GM10248 (cell line): ENCODE measurements at regions of chr5 and their contacts with region 1.

Region 1: GRCh38 chr5:177317959-177318377 is 6.3 kb upstream of the MXD3 start:
- DNase-seq: peak; percentile 70
- CTCF ChIP-seq: peak; percentile 85

Region 2: GRCh38 chr5:177351385-177352329 is 33.7 kb after region 1 on chr5 and contains the start of gene LMAN2:
- CTCF ChIA-PET with region 1: interaction called, 21 read pairs
- POLR2A ChIA-PET with region 1: no interaction called
- DNase-seq: peak; percentile 94
- CTCF ChIP-seq: no peak

Region 3: DNA sequence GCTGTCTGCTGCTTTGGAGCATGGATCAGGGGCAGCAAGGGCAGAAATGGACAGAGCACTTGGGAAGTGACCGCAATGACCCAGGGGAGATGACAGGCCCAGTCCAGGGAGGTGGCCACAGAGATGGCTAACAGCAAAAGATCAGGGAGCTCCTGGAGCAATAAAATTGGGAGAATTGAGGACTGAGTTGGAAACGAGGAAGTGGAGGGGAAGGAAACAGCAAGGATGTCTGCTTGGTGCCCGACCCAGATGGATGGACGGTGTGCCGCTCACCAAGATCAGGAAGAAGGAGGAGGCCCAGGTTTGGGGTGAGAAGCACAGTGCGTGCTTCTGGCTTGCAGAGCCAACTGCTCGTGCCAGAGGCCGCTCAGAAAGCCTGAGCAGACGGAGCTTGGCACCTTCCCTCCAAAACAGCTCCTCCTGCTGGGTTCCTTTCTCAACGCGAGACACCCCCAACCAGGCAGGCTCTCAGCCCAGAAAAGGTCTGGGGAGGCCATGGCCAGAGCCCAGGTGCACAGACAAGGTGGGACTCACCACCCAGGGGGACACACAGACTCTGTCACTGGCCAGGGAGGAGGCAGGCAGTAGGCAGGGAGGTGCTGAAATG is 64.6 kb after region 1 on chr5:
- CTCF ChIA-PET with region 1: interaction called, 12 read pairs
- POLR2A ChIA-PET with region 1: no interaction called
- DNase-seq: no peak
- CTCF ChIP-seq: peak; percentile 25